ENCODE measurements at regions of chr1 and their contacts with region 1.

Region 1: GRCh38 chr1:45550401-45551351 is at the start of gene AKR1A1:
- DNase-seq: peak; percentile 63 to 93
- H3K4me3 ChIP-seq: peak within 1 kb of the TSS; percentile 66 to 78
- H3K27ac ChIP-seq: peak within 1 kb of the TSS; percentile 82 to 84
- H3K4me1 ChIP-seq: peaks cover 0 to 5% of the 10 kb centered on the region in 2 donors
- H3K27me3 ChIP-seq: no peaks in the 10 kb centered on the region
- CTCF ChIP-seq: peak in 1 of 3 experiments; percentile 8
- total RNA-seq, gene AKR1A1: 77.5 TPM

Region 2: DNA sequence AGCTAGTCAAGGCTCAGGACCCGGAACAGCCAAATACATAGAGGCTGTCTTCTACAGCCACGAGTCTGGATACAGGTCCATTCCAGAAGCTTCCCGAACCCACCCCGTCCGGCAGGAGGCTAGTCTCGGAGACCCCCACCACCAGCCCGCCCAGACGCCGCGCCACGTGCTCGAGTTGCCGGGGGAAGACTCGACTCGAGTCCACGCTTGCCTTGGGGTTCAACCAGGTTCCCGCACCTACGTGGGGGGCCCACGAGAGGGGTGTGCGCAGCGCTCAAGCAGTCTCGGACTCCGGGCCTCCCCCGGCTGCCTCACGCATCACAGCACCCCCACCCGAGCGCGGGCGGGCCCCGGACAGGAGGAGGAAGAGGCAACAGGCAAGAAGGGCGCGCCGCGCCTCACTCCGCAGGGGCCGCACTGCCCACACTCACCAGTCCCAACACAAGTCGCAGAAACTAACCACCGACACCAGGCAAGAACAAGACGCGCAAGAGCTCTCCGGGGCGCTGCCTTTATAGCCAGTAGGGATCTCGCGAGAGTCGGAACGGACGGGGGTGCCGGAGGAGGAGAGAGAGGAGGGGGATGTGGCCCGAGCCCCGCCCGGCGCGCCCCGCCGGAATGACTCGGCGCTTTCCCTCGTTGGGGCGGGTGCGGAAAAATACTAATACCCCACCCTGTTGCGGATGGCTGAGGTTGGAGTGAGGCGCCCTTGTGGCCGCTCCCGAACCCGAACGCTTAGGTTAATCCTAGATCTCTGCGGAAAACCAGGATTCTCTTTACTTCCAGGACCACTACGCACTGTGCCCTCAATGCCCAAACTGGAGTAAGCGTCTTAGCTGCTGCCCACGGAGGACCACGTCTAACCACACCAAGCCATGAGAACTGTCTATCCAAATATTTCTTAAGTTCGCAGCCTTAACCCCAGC is 29.0 kb before region 1 on chr1 and contains the start of gene PRDX1:
- intact Hi-C with region 1: loop called (anchors 1 kb)
- DNase-seq: peak; percentile 87 to 98
- H3K4me3 ChIP-seq: peak within 1 kb of the TSS; percentile 60 to 93
- H3K27ac ChIP-seq: peak within 1 kb of the TSS; percentile 90 to 96
- H3K4me1 ChIP-seq: peaks cover 0 to 13% of the 10 kb centered on the region in 2 donors
- H3K27me3 ChIP-seq: no peaks in the 10 kb centered on the region
- CTCF ChIP-seq: peak in 1 of 3 experiments; percentile 7
- total RNA-seq, gene PRDX1: 245 TPM

Measured in ascending aorta (tissue), 2 donors.